PC-3 (cell line): ENCODE measurements at regions of chr14 and their contacts with region 1.

Region 1: DNA sequence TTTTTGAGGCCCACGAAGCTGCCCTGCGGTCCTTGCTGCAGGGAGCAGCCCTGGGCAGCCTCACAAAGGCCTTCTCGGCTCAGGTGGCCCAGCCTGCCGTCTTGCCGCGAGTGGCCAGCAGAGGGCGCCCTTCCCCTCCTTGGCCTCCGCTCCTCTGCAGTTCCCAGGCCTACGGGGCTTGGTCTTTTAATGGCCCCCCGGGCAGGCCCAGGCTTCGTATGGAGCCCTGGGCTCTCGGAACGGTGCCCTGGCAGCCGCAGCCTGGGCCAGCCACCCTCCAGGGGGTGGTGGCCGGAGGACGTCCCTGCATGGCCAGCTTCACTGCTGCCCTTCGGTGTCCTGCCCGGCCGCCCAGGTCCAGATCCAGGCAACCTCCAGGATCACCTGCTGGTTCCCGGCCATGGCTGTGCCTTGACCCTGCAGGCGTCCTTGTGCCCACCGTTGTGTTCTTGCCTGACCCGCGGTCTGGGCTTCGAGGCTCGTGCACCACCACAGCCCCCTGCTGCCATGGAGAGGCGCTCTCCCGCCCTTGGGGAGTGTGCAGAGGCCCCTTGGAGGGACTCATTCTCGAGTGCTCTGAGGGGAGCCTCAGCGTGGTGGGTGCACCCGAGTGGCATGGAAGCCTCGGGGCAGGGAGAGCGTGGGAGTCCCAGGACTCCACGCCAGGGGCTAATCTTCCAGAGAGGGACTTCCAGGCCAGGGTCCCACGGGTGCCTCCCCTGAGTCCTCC is 9.4 kb downstream of the ASPG start:
- DNase-seq: peak; percentile 70
- ATAC-seq: peak; percentile 85
- H3K4me3 ChIP-seq: no peak overlapping the region
- H3K27ac ChIP-seq: no peak overlapping the region
- H3K4me1 ChIP-seq: no peaks in the 10 kb centered on the region
- H3K27me3 ChIP-seq: no peaks in the 10 kb centered on the region
- CTCF ChIP-seq: peak; percentile 91

Region 2: DNA sequence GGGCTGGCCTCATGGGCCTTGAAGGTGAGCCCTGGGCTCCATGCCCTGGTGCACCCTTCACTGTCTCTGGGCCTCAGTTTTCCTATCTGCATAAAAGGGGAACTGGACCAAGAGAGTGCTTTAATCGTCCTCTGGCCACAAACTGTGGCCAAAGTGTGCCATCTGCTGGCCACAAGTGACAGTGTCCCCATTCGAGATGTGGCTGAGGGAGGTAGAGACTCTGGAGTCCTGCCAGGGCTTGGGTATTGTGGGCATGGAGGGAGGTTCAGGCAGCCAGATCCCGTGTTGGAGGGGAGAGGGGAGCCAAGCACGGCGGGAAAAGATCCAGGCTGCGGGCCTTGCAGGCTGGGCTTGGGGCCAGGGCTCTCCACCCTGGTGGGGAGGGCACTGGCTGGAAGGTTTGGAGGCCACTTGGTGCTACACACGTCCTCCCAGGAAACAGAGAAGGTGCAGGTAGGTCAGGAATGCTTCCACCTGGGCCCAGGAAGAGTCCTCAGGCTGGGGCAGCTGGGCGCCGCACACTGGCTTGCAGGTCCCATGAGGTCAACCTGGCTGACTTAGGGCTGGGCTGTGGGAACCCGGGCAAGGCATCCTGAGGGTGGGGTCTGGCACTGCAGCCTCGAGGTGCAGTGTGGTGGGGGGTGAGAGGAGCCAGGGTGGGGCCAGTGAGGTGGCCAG is 36.2 kb after region 1 on chr14:
- CTCF ChIA-PET with region 1: no interaction called
- POLR2A ChIA-PET with region 1: no interaction called
- intact Hi-C with region 1: loop called (anchors 2 kb)
- DNase-seq: peak; percentile 79
- ATAC-seq: peak; percentile 75
- H3K4me3 ChIP-seq: no peak overlapping the region
- H3K27ac ChIP-seq: no peak overlapping the region
- H3K4me1 ChIP-seq: no peaks in the 10 kb centered on the region
- H3K27me3 ChIP-seq: peaks cover 23% of the 10 kb centered on the region
- CTCF ChIP-seq: peak; percentile 94